ENCODE measurements at regions of chr1 and their contacts with region 1.

Region 1: DNA sequence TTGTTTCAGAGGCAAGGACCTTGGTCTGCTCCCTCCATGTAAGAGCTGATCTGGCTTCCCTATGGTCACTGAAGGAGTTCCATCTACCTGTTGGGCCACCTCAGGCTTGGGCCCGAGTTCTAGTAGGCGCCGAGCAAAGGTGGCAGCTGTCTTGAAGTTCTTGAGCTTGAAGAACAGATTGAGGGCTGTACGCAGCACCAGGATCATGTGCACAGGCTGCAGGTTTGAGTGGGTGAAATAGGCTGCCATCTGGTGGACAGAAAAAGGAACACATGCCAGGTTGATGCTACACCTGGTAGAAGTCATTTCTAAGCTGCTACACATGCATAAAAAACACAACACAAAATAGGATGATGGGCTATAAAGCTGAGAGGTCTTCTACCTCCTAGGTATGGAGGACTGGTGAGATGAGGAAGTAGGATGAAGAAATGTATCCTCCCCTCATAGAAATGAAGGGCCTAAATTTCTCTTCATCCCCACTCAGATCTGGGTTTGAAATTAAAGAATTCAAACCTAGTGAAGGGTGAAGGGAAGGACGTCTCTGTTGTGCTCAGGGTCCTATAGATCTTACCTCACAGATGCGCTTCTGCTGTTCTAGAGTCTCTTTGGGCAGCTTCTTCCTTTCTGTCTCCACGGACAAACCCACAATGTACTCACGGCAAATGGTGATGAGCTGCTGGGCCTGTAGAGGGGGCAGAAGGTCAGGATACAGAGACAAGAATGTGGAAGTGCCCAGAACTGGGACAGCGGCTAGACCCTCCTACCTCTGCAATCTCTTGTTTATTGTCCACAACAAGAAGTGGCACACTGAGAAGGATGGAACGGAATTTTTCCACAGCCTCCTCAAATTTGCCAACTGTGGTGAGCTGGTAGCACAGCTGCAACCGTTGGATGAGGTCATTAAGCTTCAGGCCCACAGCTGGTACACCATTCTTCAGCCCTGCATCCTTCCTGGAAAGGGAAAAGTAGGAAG is 6.6 kb upstream of the PEX19 start:
- DNase-seq: peak; percentile 79
- H3K4me3 Mint-ChIP-seq: no peak overlapping the region
- H3K27ac Mint-ChIP-seq: peak overlapping the region; percentile 61
- H3K4me1 Mint-ChIP-seq: no peaks in the 10 kb centered on the region
- H3K27me3 Mint-ChIP-seq: no peaks in the 10 kb centered on the region
- CTCF ChIP-seq: peak; percentile 89

Region 2: GRCh38 chr1:160085686-160086455 is 205.7 kb before region 1 on chr1:
- CTCF ChIA-PET with region 1: interaction called, 47 read pairs
- POLR2A ChIA-PET with region 1: no interaction called
- intact Hi-C with region 1: no loop called
- DNase-seq: peak; percentile 82
- H3K4me3 Mint-ChIP-seq: no peak overlapping the region
- H3K27ac Mint-ChIP-seq: no peak overlapping the region
- H3K4me1 Mint-ChIP-seq: peaks cover 5% of the 10 kb centered on the region
- H3K27me3 Mint-ChIP-seq: peaks cover 24% of the 10 kb centered on the region
- CTCF ChIP-seq: peak; percentile 96

Region 3: GRCh38 chr1:160193091-160193819 is 98.3 kb before region 1 on chr1:
- CTCF ChIA-PET with region 1: interaction called, 208 read pairs
- POLR2A ChIA-PET with region 1: interaction called, 6 read pairs
- intact Hi-C with region 1: loop called (anchors 1 kb)
- DNase-seq: peak; percentile 94
- H3K4me3 Mint-ChIP-seq: no peak overlapping the region
- H3K27ac Mint-ChIP-seq: no peak overlapping the region
- H3K4me1 Mint-ChIP-seq: no peaks in the 10 kb centered on the region
- H3K27me3 Mint-ChIP-seq: no peaks in the 10 kb centered on the region
- CTCF ChIP-seq: peak; percentile 100

Region 4: GRCh38 chr1:160238408-160238807 is 53.1 kb before region 1 on chr1:
- CTCF ChIA-PET with region 1: interaction called, 32 read pairs
- POLR2A ChIA-PET with region 1: no interaction called
- intact Hi-C with region 1: no loop called
- DNase-seq: no peak
- H3K4me3 Mint-ChIP-seq: no peak overlapping the region
- H3K27ac Mint-ChIP-seq: peak overlapping the region; percentile 39
- H3K4me1 Mint-ChIP-seq: peaks cover 6% of the 10 kb centered on the region
- H3K27me3 Mint-ChIP-seq: no peaks in the 10 kb centered on the region
- CTCF ChIP-seq: no peak

Region 5: DNA sequence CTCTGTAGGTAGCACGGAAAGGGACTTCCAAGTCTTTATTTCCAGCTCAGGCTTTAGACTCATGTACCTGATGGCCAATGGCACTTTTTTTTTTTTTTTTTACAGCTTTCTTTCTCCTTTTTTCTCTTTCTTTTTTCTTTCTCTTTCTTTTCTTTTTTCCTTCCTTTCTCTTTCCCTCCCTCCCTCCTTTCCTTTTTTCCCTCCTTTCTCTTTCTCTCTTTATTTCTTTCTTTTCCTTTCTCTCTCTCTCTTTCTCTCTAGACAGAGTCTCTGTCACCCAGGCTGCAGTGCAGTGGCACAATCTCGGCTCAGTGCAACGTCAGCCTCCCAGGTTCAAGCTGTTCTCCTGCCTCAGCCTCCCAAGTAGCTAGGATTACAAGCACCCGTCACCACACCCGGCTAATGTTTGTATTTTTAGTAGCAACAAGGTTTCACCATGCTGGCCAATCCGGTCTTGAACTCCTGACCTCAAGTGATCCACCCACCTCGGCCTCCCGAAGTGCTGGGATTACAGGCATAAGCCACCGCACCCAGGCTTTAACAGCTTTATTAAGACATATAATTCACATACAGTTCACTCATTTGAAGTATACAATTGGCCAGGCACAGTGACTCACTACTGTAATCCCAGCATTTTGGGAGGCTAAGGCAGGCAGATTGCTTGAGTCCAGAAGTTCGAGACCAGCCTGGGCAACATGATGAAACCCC is 24.1 kb before region 1 on chr1:
- CTCF ChIA-PET with region 1: interaction called, 133 read pairs
- POLR2A ChIA-PET with region 1: interaction called, 51 read pairs
- intact Hi-C with region 1: no loop called
- DNase-seq: no peak
- H3K4me3 Mint-ChIP-seq: no peak overlapping the region
- H3K27ac Mint-ChIP-seq: no peak overlapping the region
- H3K4me1 Mint-ChIP-seq: no peaks in the 10 kb centered on the region
- H3K27me3 Mint-ChIP-seq: peaks cover 16% of the 10 kb centered on the region
- CTCF ChIP-seq: no peak

Region 6: GRCh38 chr1:160328184-160328583 is 36.6 kb after region 1 on chr1:
- CTCF ChIA-PET with region 1: interaction called, 46 read pairs
- POLR2A ChIA-PET with region 1: no interaction called
- intact Hi-C with region 1: no loop called
- DNase-seq: no peak
- H3K4me3 Mint-ChIP-seq: no peak overlapping the region
- H3K27ac Mint-ChIP-seq: no peak overlapping the region
- H3K4me1 Mint-ChIP-seq: no peaks in the 10 kb centered on the region
- H3K27me3 Mint-ChIP-seq: no peaks in the 10 kb centered on the region
- CTCF ChIP-seq: no peak

Region 7: GRCh38 chr1:160410406-160411005 is 119.0 kb after region 1 on chr1:
- CTCF ChIA-PET with region 1: interaction called, 52 read pairs
- POLR2A ChIA-PET with region 1: no interaction called
- intact Hi-C with region 1: loop called (anchors 5 kb)
- DNase-seq: no peak
- H3K4me3 Mint-ChIP-seq: no peak overlapping the region
- H3K27ac Mint-ChIP-seq: no peak overlapping the region
- H3K4me1 Mint-ChIP-seq: peaks cover 21% of the 10 kb centered on the region
- H3K27me3 Mint-ChIP-seq: no peaks in the 10 kb centered on the region
- CTCF ChIP-seq: no peak

Region 8: GRCh38 chr1:160971618-160972056 is 680.1 kb after region 1 on chr1:
- CTCF ChIA-PET with region 1: no interaction called
- POLR2A ChIA-PET with region 1: no interaction called
- intact Hi-C with region 1: no loop called
- DNase-seq: no peak
- H3K4me3 Mint-ChIP-seq: no peak overlapping the region
- H3K27ac Mint-ChIP-seq: no peak overlapping the region
- H3K4me1 Mint-ChIP-seq: no peaks in the 10 kb centered on the region
- H3K27me3 Mint-ChIP-seq: peaks cover 9% of the 10 kb centered on the region
- CTCF ChIP-seq: no peak